PC-3 (cell line): ENCODE measurements at regions of chr2 and their contacts with region 1.

Region 1: GRCh38 chr2:195779491-195779890 is 122.5 kb downstream of the SLC39A10 start:
- DNase-seq: peak; percentile 66
- ATAC-seq: peak; percentile 99
- H3K4me3 ChIP-seq: no peak overlapping the region
- H3K27ac ChIP-seq: no peak overlapping the region
- H3K4me1 ChIP-seq: peaks cover 8% of the 10 kb centered on the region; the same call in 1 of the 2 replicates
- H3K27me3 ChIP-seq: no peaks in the 10 kb centered on the region
- CTCF ChIP-seq: peak; percentile 50; the same call in 1 of the 2 replicates

Region 2: DNA sequence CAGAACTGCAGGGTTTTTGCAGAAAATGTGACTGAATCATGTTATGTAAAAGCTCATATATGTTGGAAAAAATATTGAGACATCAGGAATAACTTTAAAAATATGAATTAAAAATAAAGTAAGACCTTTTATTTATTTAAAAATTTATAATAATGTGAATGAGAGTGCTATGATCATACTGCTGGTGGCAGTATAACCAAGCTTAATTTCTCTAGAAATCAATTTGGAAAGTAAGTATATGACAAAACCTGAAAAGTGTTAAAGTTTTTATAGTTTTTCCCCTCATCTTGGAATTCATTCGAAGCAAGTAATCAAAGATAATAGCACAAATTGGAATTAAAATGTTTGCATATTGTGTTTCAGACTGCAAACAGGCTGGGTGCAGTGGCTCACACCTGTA is 115.0 kb before region 1 on chr2:
- CTCF ChIA-PET with region 1: no interaction called
- POLR2A ChIA-PET with region 1: no interaction called
- intact Hi-C with region 1: loop called (anchors 2 kb)
- DNase-seq: peak; percentile 48
- ATAC-seq: peak; percentile 45; the same call in 1 of the 2 replicates
- H3K4me3 ChIP-seq: no peak overlapping the region
- H3K27ac ChIP-seq: no peak overlapping the region
- H3K4me1 ChIP-seq: peaks cover 6% of the 10 kb centered on the region
- H3K27me3 ChIP-seq: no peaks in the 10 kb centered on the region
- CTCF ChIP-seq: peak; percentile 44

Region 3: GRCh38 chr2:195674491-195675221 is 104.8 kb before region 1 on chr2:
- CTCF ChIA-PET with region 1: no interaction called
- POLR2A ChIA-PET with region 1: no interaction called
- intact Hi-C with region 1: no loop called
- DNase-seq: no peak
- ATAC-seq: peak; percentile 46; the same call in 1 of the 2 replicates
- H3K4me3 ChIP-seq: no peak overlapping the region
- H3K27ac ChIP-seq: no peak overlapping the region
- H3K4me1 ChIP-seq: peaks cover 3% of the 10 kb centered on the region; the same call in 1 of the 2 replicates
- H3K27me3 ChIP-seq: no peaks in the 10 kb centered on the region
- CTCF ChIP-seq: no peak

Region 4: GRCh38 chr2:196041786-196042185 is 262.3 kb after region 1 on chr2:
- CTCF ChIA-PET with region 1: no interaction called
- POLR2A ChIA-PET with region 1: no interaction called
- intact Hi-C with region 1: no loop called
- DNase-seq: no peak
- ATAC-seq: no peak
- H3K4me3 ChIP-seq: no peak overlapping the region
- H3K27ac ChIP-seq: no peak overlapping the region
- H3K4me1 ChIP-seq: no peaks in the 10 kb centered on the region
- H3K27me3 ChIP-seq: no peaks in the 10 kb centered on the region
- CTCF ChIP-seq: no peak